ENCODE measurements at regions of chr14 and their contacts with region 1.

Region 1: DNA sequence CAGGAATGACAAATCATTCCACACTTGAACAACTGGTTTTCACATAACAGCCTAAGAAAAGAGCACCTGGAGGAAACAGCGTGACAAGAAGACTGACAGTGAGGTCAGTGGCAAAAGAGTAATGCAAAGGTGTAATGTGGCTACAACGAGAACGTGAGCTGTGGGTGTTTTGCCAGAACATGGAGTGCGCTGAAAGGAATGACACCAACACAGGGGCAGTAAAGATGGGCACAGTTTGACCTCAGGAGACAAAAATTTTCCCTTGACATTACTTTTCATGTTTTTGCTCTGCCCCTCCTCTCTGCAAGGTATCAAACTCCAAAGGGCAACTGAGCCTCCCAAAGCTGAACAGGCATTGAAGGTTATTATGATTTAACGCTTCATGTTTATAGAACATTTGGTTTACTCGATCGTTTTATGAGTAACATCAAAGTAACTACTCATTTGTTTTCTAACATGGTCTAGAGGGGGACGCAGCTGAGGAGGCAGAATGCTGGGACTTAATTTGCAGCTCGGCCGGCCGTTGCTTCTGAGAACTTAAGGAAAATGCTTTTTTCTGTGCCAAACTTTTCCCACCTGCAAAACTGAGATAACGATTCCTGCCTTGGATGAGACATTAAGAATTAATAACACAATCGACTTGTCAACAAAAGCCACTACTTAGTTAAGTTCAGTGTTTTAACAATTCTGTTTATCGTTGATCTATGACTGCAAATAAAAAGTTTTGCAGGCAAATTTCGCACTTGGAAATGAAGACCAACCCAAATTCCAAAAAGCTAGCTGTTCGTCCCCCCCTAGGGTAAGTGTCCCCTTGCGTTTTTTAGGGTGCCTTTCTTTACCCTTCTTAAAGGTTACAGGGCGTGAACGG is 954 bp downstream of the HAUS4 start:
- DNase-seq: no peak
- H3K4me3 Mint-ChIP-seq: peak overlapping the region; percentile 89
- H3K27ac Mint-ChIP-seq: peak overlapping the region; percentile 84
- H3K4me1 Mint-ChIP-seq: peaks cover 22% of the 10 kb centered on the region
- H3K27me3 Mint-ChIP-seq: no peaks in the 10 kb centered on the region

Region 2: GRCh38 chr14:22047115-22047514 is 908.8 kb before region 1 on chr14:
- CTCF ChIA-PET with region 1: no interaction called
- intact Hi-C with region 1: no loop called
- DNase-seq: peak; percentile 56
- H3K4me3 Mint-ChIP-seq: peak overlapping the region; percentile 34
- H3K27ac Mint-ChIP-seq: peak overlapping the region; percentile 86
- H3K4me1 Mint-ChIP-seq: peaks cover 43% of the 10 kb centered on the region
- H3K27me3 Mint-ChIP-seq: no peaks in the 10 kb centered on the region

Region 3: DNA sequence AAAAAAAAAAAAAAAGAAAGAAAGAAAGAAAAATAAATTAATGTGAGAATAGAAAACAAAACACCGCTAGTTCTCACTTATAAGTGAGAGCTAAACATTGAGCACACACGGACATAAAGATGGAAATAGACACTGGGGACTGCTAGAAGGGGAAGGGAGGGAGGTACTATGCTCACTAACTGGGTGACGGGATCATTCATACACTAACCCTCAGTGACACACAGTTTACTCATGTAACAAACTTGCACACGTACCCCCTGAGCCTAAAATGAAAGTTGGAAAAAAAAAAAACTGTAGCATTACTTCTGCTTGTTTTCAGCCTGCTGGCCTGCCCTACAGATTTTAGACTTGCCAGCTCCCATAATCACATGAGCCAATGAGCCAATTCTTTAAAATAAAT is 16.3 kb before region 1 on chr14:
- CTCF ChIA-PET with region 1: interaction called, 17 read pairs
- intact Hi-C with region 1: no loop called
- DNase-seq: no peak
- H3K4me3 Mint-ChIP-seq: no peak overlapping the region
- H3K27ac Mint-ChIP-seq: no peak overlapping the region
- H3K4me1 Mint-ChIP-seq: no peaks in the 10 kb centered on the region
- H3K27me3 Mint-ChIP-seq: no peaks in the 10 kb centered on the region

Measured in activated naive CD4-positive, alpha-beta T cell treated with anti-CD3 and anti-CD28 coated beads for 36 hours (primary cell).